A549 (cell line): ENCODE measurements at regions of chr3 and their contacts with region 1.

Region 1: DNA sequence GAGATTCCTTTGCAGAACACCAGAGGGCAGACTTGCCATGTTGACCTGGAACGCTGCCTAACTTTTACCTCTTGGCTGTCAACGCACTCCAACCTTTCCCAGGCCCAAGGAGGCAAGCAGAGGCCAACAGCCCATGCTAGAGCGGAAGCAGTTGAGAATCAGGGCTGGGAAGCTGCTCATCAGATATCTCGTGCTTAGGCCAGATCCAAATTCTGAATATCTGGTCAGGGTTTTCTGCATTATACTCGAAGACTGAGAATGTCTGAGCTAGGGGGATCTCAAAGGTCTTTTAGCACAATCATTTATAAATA is 2.5 kb downstream of the XIRP1 start:
- DNase-seq: peak; percentile 71 to 76
- ATAC-seq: peak; percentile 73 to 87
- H3K4me3 ChIP-seq: no peak overlapping the region
- H3K27ac ChIP-seq: no peak overlapping the region
- H3K4me1 ChIP-seq: no peaks in the 10 kb centered on the region; the same call in 2 of the 3 replicates
- CTCF ChIP-seq: peak; percentile 67
- EP300 ChIP-seq: no peak
- POLR2A ChIP-seq: no peak
- RAD21 ChIP-seq: peak; percentile 76 to 78

Region 2: GRCh38 chr3:39107388-39108199 is 82.3 kb before region 1 on chr3 and contains the starts of genes GORASP1 and TTC21A:
- CTCF ChIA-PET with region 1: interaction called, 13 read pairs
- POLR2A ChIA-PET with region 1: interaction called, 4 read pairs
- DNase-seq: peak; percentile 82 to 91
- ATAC-seq: peak; percentile 83 to 87
- H3K4me3 ChIP-seq: peak within 1 kb of the TSS; percentile 83
- H3K27ac ChIP-seq: peak within 1 kb of the TSS; percentile 92 to 95
- H3K4me1 ChIP-seq: peaks cover 13% of the 10 kb centered on the region; the same call in 2 of the 3 replicates
- CTCF ChIP-seq: no peak
- EP300 ChIP-seq: no peak
- POLR2A ChIP-seq: peak; percentile 79
- RAD21 ChIP-seq: no peak
- polyA plus RNA-seq, gene GORASP1: 30.3 and 38.9 TPM in 2 replicates
- polyA plus RNA-seq, gene TTC21A: 1.4 and 2.0 TPM in 2 replicates

Region 3: DNA sequence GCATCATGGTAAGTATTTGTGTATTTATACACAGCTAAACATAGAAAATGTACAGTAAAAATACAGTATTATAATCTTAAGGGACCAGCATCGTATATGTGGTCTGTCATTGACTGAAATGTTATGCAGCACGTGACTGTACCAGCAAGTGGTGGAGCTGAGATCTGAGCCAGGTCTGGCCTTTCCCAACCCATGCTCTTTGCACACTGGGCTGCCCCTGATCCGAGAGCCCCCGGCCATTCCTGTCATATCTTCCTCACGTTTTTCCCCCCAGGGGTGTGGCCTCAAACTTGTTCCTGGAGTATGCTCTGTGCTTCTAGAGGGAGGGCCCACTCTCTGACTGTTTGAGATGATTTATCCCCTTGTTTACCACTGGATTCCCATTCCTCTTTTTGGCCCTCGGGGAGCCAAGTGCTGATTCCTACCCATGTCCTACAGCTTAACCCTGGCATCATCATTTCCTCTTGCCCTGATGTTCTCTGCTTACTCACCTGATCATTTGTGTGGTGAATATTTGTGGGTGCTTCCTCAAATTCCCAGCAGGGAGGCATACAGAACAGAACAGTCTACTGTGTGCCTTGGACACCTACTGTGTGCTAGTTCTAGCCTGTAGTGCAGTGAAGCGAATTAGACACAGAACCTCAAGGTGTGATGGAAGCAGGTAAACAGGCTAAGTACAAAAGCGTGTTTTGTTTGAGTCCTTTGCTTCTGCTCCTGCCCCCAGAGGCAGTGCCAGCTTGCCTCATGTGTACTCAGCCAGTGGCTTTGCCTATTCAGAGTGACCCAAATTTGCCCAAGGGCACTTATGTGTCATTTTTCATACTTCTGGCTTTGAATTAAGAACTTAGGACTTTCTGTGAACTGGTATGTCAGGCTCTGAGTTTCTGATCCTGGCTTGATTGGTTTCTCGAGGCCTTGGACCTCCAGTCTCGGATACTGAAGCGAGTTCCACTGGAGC is 57.5 kb before region 1 on chr3:
- CTCF ChIA-PET with region 1: interaction called, 95 read pairs
- POLR2A ChIA-PET with region 1: interaction called, 4 read pairs
- DNase-seq: no peak
- ATAC-seq: no peak
- H3K4me3 ChIP-seq: no peak overlapping the region
- H3K27ac ChIP-seq: no peak overlapping the region
- H3K4me1 ChIP-seq: no peaks in the 10 kb centered on the region
- CTCF ChIP-seq: no peak
- EP300 ChIP-seq: no peak
- POLR2A ChIP-seq: no peak
- RAD21 ChIP-seq: no peak

Region 4: DNA sequence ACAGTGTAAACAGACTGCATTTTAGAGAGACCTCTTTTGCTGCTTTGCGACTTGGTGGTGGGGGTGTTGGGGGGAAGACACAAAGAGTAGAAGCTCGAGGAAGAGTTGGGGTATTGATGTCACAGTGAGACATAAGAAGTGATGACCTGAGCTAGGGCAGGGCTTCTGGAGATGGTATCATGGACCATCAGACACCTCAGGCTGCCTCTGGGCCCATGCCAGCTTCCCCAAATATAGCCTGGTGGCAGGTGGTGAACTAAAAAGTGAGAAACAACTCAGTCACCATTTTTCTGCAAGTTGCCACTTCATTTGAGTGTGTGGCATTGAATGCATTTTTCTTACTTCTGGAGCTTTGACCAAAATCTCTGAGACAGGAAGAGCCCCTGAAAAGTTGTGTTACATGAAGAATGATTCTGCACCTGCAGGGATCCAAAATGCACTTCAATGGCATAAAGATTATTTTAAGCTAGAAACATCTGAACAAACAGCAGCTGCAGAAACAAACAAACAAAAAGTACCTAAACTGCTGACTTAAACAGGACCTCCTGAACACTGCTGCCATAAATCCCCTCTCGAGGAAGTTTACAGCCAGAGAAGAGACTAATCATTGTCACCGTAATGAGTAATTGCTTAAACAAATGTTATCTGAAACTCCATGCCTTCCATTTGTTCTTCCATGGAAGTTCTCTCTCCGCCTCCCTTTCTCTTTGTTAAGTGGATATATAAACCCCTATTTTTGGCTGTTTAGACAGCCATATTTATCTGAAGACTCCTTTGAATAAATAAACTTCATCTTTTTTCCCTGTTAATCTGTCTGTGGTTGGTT is 17.7 kb after region 1 on chr3:
- CTCF ChIA-PET with region 1: interaction called, 11 read pairs
- POLR2A ChIA-PET with region 1: no interaction called
- DNase-seq: no peak
- ATAC-seq: no peak
- H3K4me3 ChIP-seq: no peak overlapping the region
- H3K27ac ChIP-seq: no peak overlapping the region
- H3K4me1 ChIP-seq: no peaks in the 10 kb centered on the region
- CTCF ChIP-seq: no peak
- EP300 ChIP-seq: no peak
- POLR2A ChIP-seq: no peak
- RAD21 ChIP-seq: no peak

Region 5: GRCh38 chr3:39260957-39261356 is 71.0 kb after region 1 on chr3:
- CTCF ChIA-PET with region 1: interaction called, 10 read pairs
- POLR2A ChIA-PET with region 1: no interaction called
- DNase-seq: peak; percentile 75 to 89
- ATAC-seq: peak; percentile 94 to 96
- H3K4me3 ChIP-seq: no peak overlapping the region
- H3K27ac ChIP-seq: no peak overlapping the region
- H3K4me1 ChIP-seq: peaks cover 10% of the 10 kb centered on the region; the same call in 2 of the 3 replicates
- CTCF ChIP-seq: peak; percentile 35; the same call in 1 of the 3 replicates
- EP300 ChIP-seq: no peak
- POLR2A ChIP-seq: no peak
- RAD21 ChIP-seq: peak; percentile 19 to 40; a peak in 2 of 5 replicates